HCT116 (cell line): ENCODE measurements at regions of chr3 and their contacts with region 1.

Region 1: DNA sequence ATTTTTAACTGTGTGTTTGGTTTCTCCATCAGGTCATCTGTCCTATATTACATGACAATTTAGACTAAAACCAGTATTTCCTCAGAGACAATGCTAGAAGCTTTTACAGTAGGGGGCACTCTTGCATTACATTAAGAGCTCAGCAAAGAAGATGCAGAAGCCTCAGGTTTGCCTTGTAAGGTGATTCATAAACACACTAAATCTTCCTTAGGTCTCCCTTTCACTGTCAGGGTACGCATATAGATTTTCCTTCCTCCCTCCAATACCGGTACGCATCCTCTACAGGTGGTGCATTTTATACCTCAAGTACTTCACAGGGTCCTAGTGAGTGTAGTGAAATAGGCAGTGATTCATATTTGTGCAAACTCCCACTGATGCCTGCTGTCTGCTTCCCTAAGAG is 46.5 kb downstream of the CD86 start:
- DNase-seq: peak; percentile 65
- ATAC-seq: peak; percentile 83
- H3K4me3 ChIP-seq: no peak overlapping the region
- H3K27ac ChIP-seq: no peak overlapping the region
- H3K4me1 ChIP-seq: no peaks in the 10 kb centered on the region
- H3K27me3 ChIP-seq: 0 out of 2 replicates have a peak, but pooled peaks cover 14% of the 10 kb centered on the region
- CTCF ChIP-seq: peak; percentile 64 to 67 (median 64)
- POLR2A ChIP-seq: no peak
- RAD21 ChIP-seq: peak; percentile 86

Region 2: GRCh38 chr3:121736112-121736511 is 365.5 kb before region 1 on chr3:
- CTCF ChIA-PET with region 1: no interaction called
- POLR2A ChIA-PET with region 1: no interaction called
- RAD21 ChIA-PET with region 1: no interaction called
- intact Hi-C with region 1: no loop called
- DNase-seq: no peak
- ATAC-seq: no peak
- H3K4me3 ChIP-seq: no peak overlapping the region
- H3K27ac ChIP-seq: no peak overlapping the region
- H3K4me1 ChIP-seq: no peaks in the 10 kb centered on the region
- H3K27me3 ChIP-seq: no peaks in the 10 kb centered on the region
- CTCF ChIP-seq: no peak
- POLR2A ChIP-seq: no peak
- RAD21 ChIP-seq: no peak

Region 3: GRCh38 chr3:122258757-122259371 is 157.2 kb after region 1 on chr3:
- CTCF ChIA-PET with region 1: interaction called, 50 read pairs
- POLR2A ChIA-PET with region 1: no interaction called
- RAD21 ChIA-PET with region 1: interaction called, 3 to 4 read pairs
- intact Hi-C with region 1: loop called (anchors 1 kb)
- DNase-seq: peak; percentile 53
- ATAC-seq: peak; percentile 99
- H3K4me3 ChIP-seq: no peak overlapping the region
- H3K27ac ChIP-seq: no peak overlapping the region
- H3K4me1 ChIP-seq: 0 out of 4 replicates have a peak, but pooled peaks cover 0 to 3% of the 10 kb centered on the region in 2 experiments
- H3K27me3 ChIP-seq: no peaks in the 10 kb centered on the region
- CTCF ChIP-seq: peak; percentile 76 to 77 (median 76)
- POLR2A ChIP-seq: no peak
- RAD21 ChIP-seq: peak; percentile 90

Region 4: GRCh38 chr3:122299872-122300460 is 198.3 kb after region 1 on chr3:
- CTCF ChIA-PET with region 1: interaction called, 3 read pairs
- POLR2A ChIA-PET with region 1: no interaction called
- RAD21 ChIA-PET with region 1: no interaction called
- intact Hi-C with region 1: loop called (anchors 1 kb)
- DNase-seq: peak; percentile 15
- ATAC-seq: peak; percentile 44; the same call in 1 of the 2 replicates
- H3K4me3 ChIP-seq: no peak overlapping the region
- H3K27ac ChIP-seq: no peak overlapping the region
- H3K4me1 ChIP-seq: no peaks in the 10 kb centered on the region
- H3K27me3 ChIP-seq: no peaks in the 10 kb centered on the region
- CTCF ChIP-seq: peak; percentile 49 to 67 (median 63); a peak in 5 of 6 replicates
- POLR2A ChIP-seq: no peak
- RAD21 ChIP-seq: peak; percentile 70

Region 5: DNA sequence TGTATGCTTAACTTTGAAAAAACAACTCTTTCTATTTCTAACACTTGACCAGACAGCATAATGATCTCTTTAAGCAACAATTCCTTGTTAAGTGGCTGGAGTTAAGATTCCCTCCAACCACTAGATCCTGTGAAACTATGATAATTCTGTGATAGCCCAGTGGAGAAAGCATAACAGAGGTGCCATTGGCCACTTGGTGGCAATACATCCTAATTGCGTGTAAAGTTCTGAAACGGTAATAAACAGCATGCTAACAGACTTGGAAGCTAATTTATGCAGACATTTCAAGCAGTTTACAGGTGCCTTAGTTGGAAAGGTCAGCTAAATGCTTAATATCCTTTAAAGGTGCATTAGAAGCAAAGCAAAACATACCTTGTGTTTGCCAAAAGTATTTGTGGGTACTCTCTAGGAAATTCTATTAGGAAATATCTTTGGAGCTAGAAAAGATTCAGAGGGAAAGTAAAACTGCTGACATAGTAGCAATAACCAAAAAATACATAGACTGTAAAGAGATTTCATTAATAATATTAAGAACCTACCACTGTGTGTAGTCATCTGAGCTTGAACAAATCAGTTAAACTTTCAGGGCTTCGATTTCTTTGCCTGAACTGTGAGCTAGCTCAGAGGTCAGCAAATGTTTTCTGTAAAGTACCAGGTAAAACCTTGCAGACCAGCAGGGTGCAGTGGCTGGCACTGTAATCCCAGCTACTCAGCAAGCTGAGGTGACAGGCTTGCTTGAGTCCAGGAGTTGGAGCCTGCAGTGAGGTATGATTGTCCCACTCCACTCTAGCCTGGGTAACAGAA is 204.4 kb after region 1 on chr3:
- CTCF ChIA-PET with region 1: interaction called, 11 read pairs
- POLR2A ChIA-PET with region 1: no interaction called
- RAD21 ChIA-PET with region 1: interaction called in 1 of 2 experiments, 3 read pairs
- intact Hi-C with region 1: no loop called
- DNase-seq: peak; percentile 23
- ATAC-seq: peak; percentile 93
- H3K4me3 ChIP-seq: no peak overlapping the region
- H3K27ac ChIP-seq: no peak overlapping the region
- H3K4me1 ChIP-seq: 0 out of 4 replicates have a peak, but pooled peaks cover 0 to 3% of the 10 kb centered on the region in 2 experiments
- H3K27me3 ChIP-seq: no peaks in the 10 kb centered on the region
- CTCF ChIP-seq: peak; percentile 40 to 54 (median 49); a peak in 5 of 6 replicates
- POLR2A ChIP-seq: no peak
- RAD21 ChIP-seq: peak; percentile 63

Region 6: DNA sequence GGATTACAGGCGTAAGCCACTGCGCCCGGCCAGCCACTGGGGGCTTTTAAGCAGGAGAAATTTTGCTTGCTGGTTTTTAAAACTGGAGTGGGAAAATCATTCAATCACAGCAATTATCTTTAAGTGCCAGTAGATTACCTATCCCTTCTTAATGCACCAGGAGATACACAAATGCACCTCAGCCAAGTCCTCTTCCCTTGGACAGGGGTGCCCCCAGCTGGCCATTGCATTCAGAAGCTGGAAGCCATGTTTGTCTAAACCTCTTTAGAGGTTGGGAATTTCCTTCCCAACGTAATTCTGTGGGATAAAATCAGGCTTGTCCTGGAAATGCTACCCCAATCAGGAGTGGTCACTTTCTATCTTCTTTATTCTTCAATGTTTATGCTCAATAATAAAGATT is 254.8 kb after region 1 on chr3:
- CTCF ChIA-PET with region 1: interaction called, 6 read pairs
- POLR2A ChIA-PET with region 1: no interaction called
- RAD21 ChIA-PET with region 1: no interaction called
- intact Hi-C with region 1: loop called (anchors 1 kb)
- DNase-seq: peak; percentile 34
- ATAC-seq: peak; percentile 78
- H3K4me3 ChIP-seq: no peak overlapping the region
- H3K27ac ChIP-seq: no peak overlapping the region
- H3K4me1 ChIP-seq: no peaks in the 10 kb centered on the region
- H3K27me3 ChIP-seq: no peaks in the 10 kb centered on the region
- CTCF ChIP-seq: peak; percentile 51 to 59 (median 55); a peak in 5 of 6 replicates
- POLR2A ChIP-seq: no peak
- RAD21 ChIP-seq: peak; percentile 81

Region 7: GRCh38 chr3:122538956-122539490 is 437.4 kb after region 1 on chr3:
- CTCF ChIA-PET with region 1: no interaction called
- POLR2A ChIA-PET with region 1: no interaction called
- RAD21 ChIA-PET with region 1: no interaction called
- intact Hi-C with region 1: no loop called
- DNase-seq: no peak
- ATAC-seq: no peak
- H3K4me3 ChIP-seq: no peak overlapping the region
- H3K27ac ChIP-seq: no peak overlapping the region
- H3K4me1 ChIP-seq: peaks cover 5% of the 10 kb centered on the region in 2 experiments
- H3K27me3 ChIP-seq: no peaks in the 10 kb centered on the region
- CTCF ChIP-seq: no peak
- POLR2A ChIP-seq: no peak
- RAD21 ChIP-seq: no peak

Region 8: GRCh38 chr3:122679085-122679881 is 577.6 kb after region 1 on chr3:
- CTCF ChIA-PET with region 1: no interaction called
- POLR2A ChIA-PET with region 1: no interaction called
- RAD21 ChIA-PET with region 1: no interaction called
- intact Hi-C with region 1: loop called (anchors 5 kb)
- DNase-seq: peak; percentile 72
- ATAC-seq: peak; percentile 73
- H3K4me3 ChIP-seq: peak overlapping the region; percentile 77 to 85
- H3K27ac ChIP-seq: peak overlapping the region; percentile 68
- H3K4me1 ChIP-seq: peaks cover 13 to 29% of the 10 kb centered on the region in 2 experiments; a peak in 3 of 4 replicates
- H3K27me3 ChIP-seq: no peaks in the 10 kb centered on the region
- CTCF ChIP-seq: peak; percentile 69 to 91 (median 78)
- POLR2A ChIP-seq: no peak
- RAD21 ChIP-seq: peak; percentile 95